BJ (cell line): ENCODE measurements at regions of chr10 and their contacts with region 1.

Region 1: GRCh38 chr10:92290837-92291615 is at the starts of genes CPEB3 and MARCHF5:
- DNase-seq: peak; percentile 82
- H3K4me3 ChIP-seq: peak within 1 kb of the TSS; percentile 100
- H3K27me3 ChIP-seq: no peaks in the 10 kb centered on the region
- CTCF ChIP-seq: peak; percentile 76
- polyA plus RNA-seq, gene CPEB3: 0.28 TPM in 2 replicates
- polyA plus RNA-seq, gene MARCHF5: 13.1 and 23.2 TPM in 2 replicates

Region 2: DNA sequence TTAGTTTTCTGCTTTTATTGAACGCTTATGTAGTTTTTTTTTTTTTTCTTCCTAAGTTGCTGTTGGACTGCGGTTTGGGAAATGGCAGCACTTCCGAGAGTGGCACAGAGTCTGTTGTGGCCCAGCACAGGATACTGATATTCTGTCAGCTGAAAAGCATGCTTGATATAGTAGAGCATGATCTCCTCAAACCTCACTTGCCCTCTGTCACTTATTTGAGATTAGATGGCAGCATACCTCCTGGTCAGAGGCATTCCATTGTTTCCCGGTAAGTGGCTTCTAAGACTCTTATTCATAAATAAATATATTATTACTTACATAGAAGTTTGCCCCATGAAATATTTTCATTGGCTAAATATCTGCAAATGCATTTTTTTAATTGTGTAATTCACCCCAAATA is 266.3 kb before region 1 on chr10:
- CTCF ChIA-PET with region 1: no interaction called
- POLR2A ChIA-PET with region 1: no interaction called
- DNase-seq: no peak
- H3K4me3 ChIP-seq: no peak overlapping the region
- H3K27me3 ChIP-seq: no peaks in the 10 kb centered on the region
- CTCF ChIP-seq: no peak

Region 3: GRCh38 chr10:92068900-92069299 is 222.1 kb before region 1 on chr10:
- CTCF ChIA-PET with region 1: no interaction called
- POLR2A ChIA-PET with region 1: no interaction called
- DNase-seq: no peak
- H3K4me3 ChIP-seq: no peak overlapping the region
- H3K27me3 ChIP-seq: no peaks in the 10 kb centered on the region
- CTCF ChIP-seq: no peak

Region 4: DNA sequence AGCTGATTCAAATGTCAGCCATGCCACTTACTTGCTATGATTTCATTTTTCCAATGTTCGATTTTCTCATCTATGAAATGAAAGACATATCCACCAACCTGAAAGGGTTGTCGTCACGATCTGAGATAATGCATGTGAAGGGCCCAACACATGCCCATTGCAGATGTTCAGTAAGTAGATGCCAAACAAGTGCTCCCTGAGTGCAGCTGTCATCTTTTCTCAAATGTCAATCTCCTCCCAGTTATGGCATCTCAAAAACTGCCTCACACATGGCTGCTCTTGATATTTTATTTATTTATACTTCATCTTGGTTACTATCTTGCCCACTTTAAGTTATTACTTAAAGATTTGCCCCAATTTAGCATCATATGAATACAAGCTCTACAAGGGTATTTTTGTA is 17.0 kb before region 1 on chr10:
- CTCF ChIA-PET with region 1: interaction called, 11 read pairs
- POLR2A ChIA-PET with region 1: no interaction called
- DNase-seq: no peak
- H3K4me3 ChIP-seq: no peak overlapping the region
- H3K27me3 ChIP-seq: no peaks in the 10 kb centered on the region
- CTCF ChIP-seq: no peak

Region 5: DNA sequence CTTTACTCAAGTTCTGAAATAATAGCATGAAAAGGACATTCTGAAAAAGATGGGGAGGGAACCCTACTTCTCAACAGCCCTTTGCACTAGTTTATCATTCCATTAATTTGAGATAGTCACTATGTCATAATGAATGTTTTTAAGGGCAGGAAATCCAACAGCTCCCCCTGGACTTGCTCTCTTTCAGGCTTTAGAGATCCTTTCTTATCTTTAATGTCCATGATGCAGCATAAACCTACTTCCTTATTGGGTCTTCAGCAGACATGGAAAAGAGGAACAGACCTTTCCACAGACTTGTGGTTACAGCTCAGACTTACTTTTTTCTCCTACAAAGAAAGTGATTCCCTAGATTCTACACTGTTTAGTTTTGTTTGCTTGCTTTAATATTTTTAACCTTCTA is 195.6 kb after region 1 on chr10:
- CTCF ChIA-PET with region 1: no interaction called
- POLR2A ChIA-PET with region 1: no interaction called
- DNase-seq: no peak
- H3K4me3 ChIP-seq: no peak overlapping the region
- H3K27me3 ChIP-seq: no peaks in the 10 kb centered on the region
- CTCF ChIP-seq: no peak